B cell (primary cell): ENCODE measurements at regions of chr12 and their contacts with region 1.

Region 1: DNA sequence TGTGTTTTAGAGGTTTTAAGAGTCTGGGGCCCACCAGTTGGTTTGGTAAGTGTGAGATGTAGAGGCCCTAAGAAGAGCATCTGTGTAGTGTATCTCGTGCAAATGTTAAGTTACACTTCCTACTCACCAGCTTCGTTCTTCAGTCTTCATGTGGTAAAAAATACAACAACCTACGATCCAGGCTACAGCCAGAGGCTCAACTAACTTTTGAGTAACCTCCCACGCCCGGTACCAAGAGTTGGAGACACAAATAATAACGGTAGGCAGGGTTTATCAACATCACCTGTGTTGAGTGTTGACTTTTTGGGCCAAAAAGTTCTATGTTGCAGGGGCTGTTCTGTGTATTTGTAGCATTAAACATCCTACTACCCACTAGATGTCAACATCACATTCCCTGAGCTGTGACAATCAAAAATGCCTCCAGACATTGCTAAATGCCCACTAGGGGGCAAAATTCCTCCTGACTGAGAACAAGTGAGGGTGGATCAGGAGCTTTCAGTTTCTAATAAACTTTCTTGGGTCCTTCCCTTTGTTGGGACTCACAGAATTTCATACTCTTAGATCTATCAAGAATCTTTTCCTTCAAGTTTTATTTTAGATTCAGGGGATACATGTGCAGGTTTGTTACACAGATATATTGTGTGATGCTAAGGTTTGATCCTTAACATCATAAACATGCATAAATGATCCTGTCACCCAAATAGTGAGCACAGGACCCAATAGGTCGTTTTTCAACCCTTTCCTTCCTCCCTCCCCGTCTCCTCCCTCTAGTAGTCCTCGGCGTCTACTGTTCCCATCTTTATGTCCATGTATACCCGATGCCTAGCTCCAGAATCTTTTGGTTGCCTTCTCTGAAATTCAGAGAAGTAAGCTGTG is 94.7 kb downstream of the SLC2A13 start:
- DNase-seq: peak; percentile 82
- ATAC-seq: peak; percentile 89
- H3K4me3 ChIP-seq: peak overlapping the region in 4 of 5 experiments; percentile 21 to 54 (median 40)
- H3K4me3 Mint-ChIP-seq: peak overlapping the region; percentile 80
- H3K27ac ChIP-seq: peak overlapping the region in 1 of 2 donors; percentile 35
- H3K27ac Mint-ChIP-seq: peak overlapping the region; percentile 10
- H3K4me1 ChIP-seq: peaks cover 5 to 6% of the 10 kb centered on the region in 2 donors
- H3K4me1 Mint-ChIP-seq: peaks cover 17% of the 10 kb centered on the region
- H3K27me3 ChIP-seq: no peaks in the 10 kb centered on the region
- H3K27me3 Mint-ChIP-seq: no peaks in the 10 kb centered on the region
- CTCF ChIP-seq: peak; percentile 85

Region 2: GRCh38 chr12:38324896-38325295 is 1686.2 kb before region 1 on chr12:
- CTCF ChIA-PET with region 1: no interaction called
- POLR2A ChIA-PET with region 1: no interaction called
- intact Hi-C with region 1: loop called (anchors 10 kb)
- DNase-seq: no peak
- ATAC-seq: no peak
- H3K4me3 ChIP-seq: no peak overlapping the region
- H3K4me3 Mint-ChIP-seq: no peak overlapping the region
- H3K27ac ChIP-seq: no peak overlapping the region
- H3K27ac Mint-ChIP-seq: no peak overlapping the region
- H3K4me1 ChIP-seq: no peaks in the 10 kb centered on the region
- H3K4me1 Mint-ChIP-seq: peaks cover 2% of the 10 kb centered on the region
- H3K27me3 ChIP-seq: no peaks in the 10 kb centered on the region
- H3K27me3 Mint-ChIP-seq: no peaks in the 10 kb centered on the region
- CTCF ChIP-seq: no peak

Region 3: GRCh38 chr12:39831587-39832308 is 179.4 kb before region 1 on chr12:
- CTCF ChIA-PET with region 1: no interaction called
- POLR2A ChIA-PET with region 1: no interaction called
- intact Hi-C with region 1: no loop called
- DNase-seq: no peak
- ATAC-seq: no peak
- H3K4me3 ChIP-seq: no peak overlapping the region
- H3K4me3 Mint-ChIP-seq: no peak overlapping the region
- H3K27ac ChIP-seq: no peak overlapping the region
- H3K27ac Mint-ChIP-seq: no peak overlapping the region
- H3K4me1 ChIP-seq: peaks cover 0 to 3% of the 10 kb centered on the region in 2 donors
- H3K4me1 Mint-ChIP-seq: peaks cover 5% of the 10 kb centered on the region
- H3K27me3 ChIP-seq: no peaks in the 10 kb centered on the region
- H3K27me3 Mint-ChIP-seq: no peaks in the 10 kb centered on the region
- CTCF ChIP-seq: no peak

Region 4: GRCh38 chr12:39990122-39991101 is 20.7 kb before region 1 on chr12:
- CTCF ChIA-PET with region 1: interaction called, 27 read pairs
- POLR2A ChIA-PET with region 1: no interaction called
- intact Hi-C with region 1: no loop called
- DNase-seq: peak; percentile 62
- ATAC-seq: peak; percentile 73
- H3K4me3 ChIP-seq: no peak overlapping the region
- H3K4me3 Mint-ChIP-seq: no peak overlapping the region
- H3K27ac ChIP-seq: no peak overlapping the region
- H3K27ac Mint-ChIP-seq: no peak overlapping the region
- H3K4me1 ChIP-seq: no peaks in the 10 kb centered on the region
- H3K4me1 Mint-ChIP-seq: peaks cover 8% of the 10 kb centered on the region
- H3K27me3 ChIP-seq: no peaks in the 10 kb centered on the region
- H3K27me3 Mint-ChIP-seq: no peaks in the 10 kb centered on the region
- CTCF ChIP-seq: peak; percentile 95

Region 5: DNA sequence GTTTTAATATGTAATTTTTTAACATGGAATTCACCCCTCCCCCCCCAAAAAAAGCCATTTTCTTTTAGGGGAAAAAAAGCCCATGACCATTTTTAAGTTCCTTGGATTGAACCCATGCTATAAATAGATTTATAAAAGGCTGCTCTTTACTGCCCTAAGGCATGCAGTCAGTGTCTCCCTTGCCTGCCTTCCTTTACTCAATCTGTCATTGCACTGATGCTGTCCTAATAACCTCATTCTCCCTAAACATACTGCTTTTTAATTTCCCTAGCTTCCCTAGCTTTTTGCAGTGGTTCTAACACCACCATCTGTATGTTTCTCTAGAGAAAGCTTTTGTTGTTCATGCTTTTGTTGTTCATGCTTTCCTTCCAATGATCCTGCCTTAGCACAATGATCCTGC is 11.7 kb after region 1 on chr12:
- CTCF ChIA-PET with region 1: interaction called, 19 read pairs
- POLR2A ChIA-PET with region 1: no interaction called
- intact Hi-C with region 1: no loop called
- DNase-seq: no peak
- ATAC-seq: no peak
- H3K4me3 ChIP-seq: no peak overlapping the region
- H3K4me3 Mint-ChIP-seq: no peak overlapping the region
- H3K27ac ChIP-seq: no peak overlapping the region
- H3K27ac Mint-ChIP-seq: no peak overlapping the region
- H3K4me1 ChIP-seq: peaks cover 0 to 4% of the 10 kb centered on the region in 2 donors
- H3K4me1 Mint-ChIP-seq: peaks cover 14% of the 10 kb centered on the region
- H3K27me3 ChIP-seq: no peaks in the 10 kb centered on the region
- H3K27me3 Mint-ChIP-seq: no peaks in the 10 kb centered on the region
- CTCF ChIP-seq: no peak

Region 6: GRCh38 chr12:40032433-40033241 is 21.5 kb after region 1 on chr12:
- CTCF ChIA-PET with region 1: interaction called, 14 read pairs
- POLR2A ChIA-PET with region 1: no interaction called
- intact Hi-C with region 1: no loop called
- DNase-seq: no peak
- ATAC-seq: no peak
- H3K4me3 ChIP-seq: no peak overlapping the region
- H3K4me3 Mint-ChIP-seq: no peak overlapping the region
- H3K27ac ChIP-seq: no peak overlapping the region
- H3K27ac Mint-ChIP-seq: no peak overlapping the region
- H3K4me1 ChIP-seq: no peaks in the 10 kb centered on the region
- H3K4me1 Mint-ChIP-seq: no peaks in the 10 kb centered on the region
- H3K27me3 ChIP-seq: no peaks in the 10 kb centered on the region
- H3K27me3 Mint-ChIP-seq: no peaks in the 10 kb centered on the region
- CTCF ChIP-seq: no peak

Region 7: DNA sequence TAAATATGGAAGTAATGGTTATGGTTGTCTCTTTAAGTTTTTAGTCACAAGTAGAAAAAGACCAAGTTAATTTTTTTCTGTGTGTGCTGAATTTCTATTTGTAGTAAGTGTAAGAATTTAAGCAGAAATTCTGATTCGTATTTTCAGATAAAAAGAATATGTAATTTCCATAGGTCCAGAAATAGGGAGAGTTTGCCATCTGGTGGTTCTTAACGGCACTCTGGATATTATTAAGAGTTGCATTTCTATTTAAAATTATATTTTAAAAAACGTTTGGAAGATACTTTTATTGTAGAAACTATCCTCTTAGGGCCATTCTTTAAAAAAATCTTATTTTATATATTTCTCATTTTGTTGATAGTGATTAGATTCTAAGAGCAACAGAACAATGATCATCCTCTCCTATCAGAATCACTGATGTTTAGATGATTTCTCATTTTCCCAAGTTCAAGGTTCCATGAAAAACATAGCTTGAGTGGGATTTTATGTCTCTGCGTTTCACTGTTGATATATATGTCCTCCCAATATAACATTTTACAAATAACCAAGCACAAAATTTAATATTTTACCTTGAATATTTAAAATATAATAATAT is 301.9 kb after region 1 on chr12:
- CTCF ChIA-PET with region 1: interaction called, 45 read pairs
- POLR2A ChIA-PET with region 1: no interaction called
- intact Hi-C with region 1: loop called (anchors 1 kb)
- DNase-seq: peak; percentile 51
- ATAC-seq: no peak
- H3K4me3 ChIP-seq: no peak overlapping the region
- H3K4me3 Mint-ChIP-seq: no peak overlapping the region
- H3K27ac ChIP-seq: peak overlapping the region in 1 of 2 donors; percentile 13
- H3K27ac Mint-ChIP-seq: no peak overlapping the region
- H3K4me1 ChIP-seq: peaks cover 13 to 15% of the 10 kb centered on the region in 2 donors
- H3K4me1 Mint-ChIP-seq: peaks cover 26% of the 10 kb centered on the region
- H3K27me3 ChIP-seq: no peaks in the 10 kb centered on the region
- H3K27me3 Mint-ChIP-seq: no peaks in the 10 kb centered on the region
- CTCF ChIP-seq: peak; percentile 78

Region 8: DNA sequence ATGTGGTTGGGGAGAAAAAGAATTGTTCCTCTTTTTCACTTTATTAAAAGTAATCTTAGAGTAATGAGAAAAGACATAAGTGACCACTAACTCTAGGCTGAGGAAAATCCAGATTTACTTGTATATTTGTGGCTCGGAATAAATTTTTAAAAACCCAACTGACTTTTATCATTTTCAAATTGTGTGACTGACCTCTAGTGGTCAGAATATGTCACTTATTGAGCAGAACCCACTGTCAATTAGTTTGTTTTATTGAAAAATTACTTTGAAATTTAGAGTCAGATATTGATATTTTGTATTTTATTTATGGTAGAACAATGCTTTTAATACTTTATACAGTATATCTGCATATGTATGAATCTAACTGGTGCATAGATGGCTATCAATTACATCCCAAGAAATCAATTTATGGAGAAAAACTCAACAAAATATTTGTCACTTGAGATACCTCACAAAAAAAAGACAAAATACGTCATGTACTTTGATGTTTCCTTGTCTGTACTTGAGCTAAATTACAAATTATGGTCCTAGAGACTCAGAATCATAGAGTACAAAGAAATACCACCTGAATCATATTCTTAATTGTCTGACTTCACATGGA is 910.5 kb after region 1 on chr12:
- CTCF ChIA-PET with region 1: interaction called, 3 read pairs
- POLR2A ChIA-PET with region 1: no interaction called
- intact Hi-C with region 1: loop called (anchors 1 kb)
- DNase-seq: peak; percentile 12
- ATAC-seq: no peak
- H3K4me3 ChIP-seq: no peak overlapping the region
- H3K4me3 Mint-ChIP-seq: no peak overlapping the region
- H3K27ac ChIP-seq: no peak overlapping the region
- H3K27ac Mint-ChIP-seq: no peak overlapping the region
- H3K4me1 ChIP-seq: no peaks in the 10 kb centered on the region
- H3K4me1 Mint-ChIP-seq: no peaks in the 10 kb centered on the region
- H3K27me3 ChIP-seq: no peaks in the 10 kb centered on the region
- H3K27me3 Mint-ChIP-seq: peaks cover 7% of the 10 kb centered on the region
- CTCF ChIP-seq: peak; percentile 82